HEK293 (cell line): ENCODE measurements at regions of chr1 and their contacts with region 1.

Region 1: GRCh38 chr1:235513495-235514366 is 9.5 kb upstream of the B3GALNT2 start:
- H3K4me3 ChIP-seq: no peak overlapping the region
- H3K27ac ChIP-seq: no peak overlapping the region
- H3K4me1 ChIP-seq: no peaks in the 10 kb centered on the region
- CTCF ChIP-seq: peak; percentile 61; the same call in 1 of the 2 replicates

Region 2: DNA sequence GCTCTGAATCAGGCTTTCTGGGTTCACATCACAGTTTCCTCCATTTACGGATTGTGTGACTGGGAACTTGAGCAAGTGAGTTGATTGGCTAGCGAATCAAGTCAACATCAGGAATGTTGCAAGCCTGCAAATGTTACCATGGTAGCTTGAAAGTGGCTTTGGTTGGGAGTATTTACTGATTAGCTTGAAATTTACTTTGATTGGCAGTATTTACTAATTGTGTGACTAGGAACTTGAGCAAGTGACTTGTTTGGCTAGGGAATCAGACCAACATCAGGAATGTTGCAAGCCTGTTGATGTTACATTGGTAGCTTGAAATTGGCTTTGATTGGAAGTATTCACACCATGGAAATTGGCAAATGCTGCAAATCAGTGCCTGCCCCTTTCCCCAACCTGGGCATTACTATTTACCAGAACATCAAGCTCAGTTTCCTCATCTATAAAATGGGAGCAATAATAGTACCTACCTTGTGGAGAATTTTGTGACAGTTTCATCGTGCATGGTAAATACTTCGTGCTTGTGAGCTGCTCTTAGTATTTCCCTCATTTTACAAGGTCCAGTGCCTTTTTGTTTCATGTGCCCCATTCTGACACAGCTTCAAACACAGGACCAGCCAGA is 13.6 kb after region 1 on chr1:
- CTCF ChIA-PET with region 1: interaction called, 18 read pairs
- POLR2A ChIA-PET with region 1: no interaction called
- H3K4me3 ChIP-seq: no peak overlapping the region
- H3K27ac ChIP-seq: no peak overlapping the region
- H3K4me1 ChIP-seq: no peaks in the 10 kb centered on the region
- CTCF ChIP-seq: no peak

Region 3: GRCh38 chr1:235734335-235734734 is 220.6 kb after region 1 on chr1:
- CTCF ChIA-PET with region 1: interaction called, 12 read pairs
- POLR2A ChIA-PET with region 1: no interaction called
- H3K4me3 ChIP-seq: no peak overlapping the region
- H3K27ac ChIP-seq: no peak overlapping the region
- H3K4me1 ChIP-seq: peaks cover 5% of the 10 kb centered on the region; the same call in 1 of the 2 replicates
- CTCF ChIP-seq: no peak